GM12878 (cell line): ENCODE measurements at regions of chr5 and their contacts with region 1.

Region 1: GRCh38 chr5:22985446-22985845 is 132.3 kb upstream of the CDH12 start:
- DNase-seq: no peak
- ATAC-seq: no peak
- H3K4me3 ChIP-seq: no peak overlapping the region
- H3K27ac ChIP-seq: no peak overlapping the region
- H3K4me1 ChIP-seq: no peaks in the 10 kb centered on the region
- H3K27me3 ChIP-seq: no peaks in the 10 kb centered on the region
- CTCF ChIP-seq: no peak
- EP300 ChIP-seq: no peak
- POLR2A ChIP-seq: no peak
- RAD21 ChIP-seq: no peak

Region 2: GRCh38 chr5:22970956-22971618 is 14.4 kb before region 1 on chr5:
- CTCF ChIA-PET with region 1: interaction called, 5 read pairs
- POLR2A ChIA-PET with region 1: no interaction called
- RAD21 ChIA-PET with region 1: interaction called, 4 read pairs
- SMC1A ChIA-PET with region 1: interaction called, 13 read pairs
- in situ Hi-C with region 1: no loop called
- intact Hi-C with region 1: no loop called
- DNase-seq: no peak
- ATAC-seq: peak; percentile 37; the same call in 2 of the 3 replicates
- H3K4me3 ChIP-seq: no peak overlapping the region
- H3K27ac ChIP-seq: no peak overlapping the region
- H3K4me1 ChIP-seq: no peaks in the 10 kb centered on the region
- H3K27me3 ChIP-seq: no peaks in the 10 kb centered on the region
- CTCF ChIP-seq: no peak
- EP300 ChIP-seq: no peak
- POLR2A ChIP-seq: no peak
- RAD21 ChIP-seq: no peak